ENCODE measurements at regions of chr21 and their contacts with region 1.

Region 1: DNA sequence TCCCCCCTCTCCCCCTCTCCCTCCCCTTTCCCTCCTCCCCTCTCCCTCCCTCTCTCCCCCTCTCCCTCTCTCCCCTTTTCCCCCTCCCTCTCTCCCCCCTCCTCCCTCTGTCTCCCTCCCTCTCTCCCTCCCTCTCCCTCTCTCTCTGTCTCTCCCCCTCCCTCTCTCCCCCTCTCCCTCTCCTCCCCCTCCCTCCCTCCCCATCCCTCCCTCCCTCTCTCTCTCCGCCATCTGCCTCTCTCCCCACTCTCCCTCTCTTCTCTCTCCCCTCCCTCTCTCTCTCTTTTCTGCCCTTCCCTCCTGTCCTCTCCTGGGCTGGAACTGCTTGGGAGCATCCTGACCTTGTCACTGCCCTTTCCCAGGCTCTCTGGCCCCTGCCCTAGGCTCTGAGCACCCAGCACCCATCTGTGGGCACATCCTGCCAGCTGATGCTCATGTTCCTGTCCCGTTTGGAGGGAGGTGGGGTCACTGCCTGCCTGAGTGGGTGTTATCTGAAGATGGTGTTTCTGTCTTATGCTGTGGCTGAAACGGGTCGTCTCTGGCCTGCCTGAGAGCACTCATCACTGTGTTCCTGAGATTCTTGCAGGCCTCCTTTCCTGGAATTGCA is 10.8 kb downstream of the FTCD start:
- DNase-seq: no peak
- ATAC-seq: no peak
- H3K4me3 ChIP-seq: no peak overlapping the region
- H3K4me3 Mint-ChIP-seq: no peak overlapping the region
- H3K27ac ChIP-seq: no peak overlapping the region
- H3K27ac Mint-ChIP-seq: no peak overlapping the region
- H3K4me1 ChIP-seq: peaks cover 12% of the 10 kb centered on the region
- H3K4me1 Mint-ChIP-seq: peaks cover 8% of the 10 kb centered on the region
- H3K27me3 ChIP-seq: no peaks in the 10 kb centered on the region
- H3K27me3 Mint-ChIP-seq: no peaks in the 10 kb centered on the region
- CTCF ChIP-seq: no peak

Region 2: DNA sequence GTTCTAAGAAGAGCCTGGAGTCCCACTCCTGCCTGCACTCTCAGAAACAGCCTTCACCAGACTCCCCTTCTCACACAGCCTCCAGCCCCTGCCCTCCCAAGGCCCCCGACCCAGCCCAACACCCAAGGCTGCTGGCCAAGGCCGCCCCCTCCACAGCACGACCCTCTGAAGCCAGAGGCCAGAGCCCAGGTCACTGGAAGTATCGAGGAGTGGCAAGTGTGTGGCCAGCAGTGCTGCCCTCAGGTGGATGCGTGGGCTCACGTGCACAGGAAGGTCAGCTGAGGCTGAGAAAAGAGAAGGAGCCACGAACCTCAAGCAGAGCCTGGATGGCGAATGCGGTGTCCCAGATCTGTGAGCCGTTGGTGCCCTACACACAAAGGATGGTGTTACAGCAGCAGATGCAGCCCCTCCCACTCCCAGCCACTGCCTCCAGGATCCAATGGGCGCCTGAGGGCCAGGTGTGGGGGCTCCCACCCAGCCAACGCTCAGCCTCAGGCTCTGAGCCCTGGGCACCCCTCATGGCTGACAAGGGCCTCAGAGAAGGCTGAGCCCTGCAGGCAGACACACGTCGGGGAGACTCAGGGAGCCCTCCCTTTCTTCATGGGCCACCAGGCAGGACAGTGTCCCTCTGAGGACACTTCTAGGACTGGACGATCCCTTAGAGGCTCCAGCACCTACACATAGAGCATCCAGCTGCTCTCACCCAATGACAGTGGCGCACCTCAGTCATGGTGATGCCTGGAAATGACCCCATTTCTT is 66.0 kb after region 1 on chr21:
- CTCF ChIA-PET with region 1: no interaction called
- POLR2A ChIA-PET with region 1: no interaction called
- intact Hi-C with region 1: no loop called
- DNase-seq: peak in 1 of 14 experiments; percentile 15
- ATAC-seq: no peak
- H3K4me3 ChIP-seq: no peak overlapping the region
- H3K4me3 Mint-ChIP-seq: no peak overlapping the region
- H3K27ac ChIP-seq: no peak overlapping the region
- H3K27ac Mint-ChIP-seq: no peak overlapping the region
- H3K4me1 ChIP-seq: no peaks in the 10 kb centered on the region
- H3K4me1 Mint-ChIP-seq: no peaks in the 10 kb centered on the region
- H3K27me3 ChIP-seq: no peaks in the 10 kb centered on the region
- H3K27me3 Mint-ChIP-seq: no peaks in the 10 kb centered on the region
- CTCF ChIP-seq: no peak

Region 3: DNA sequence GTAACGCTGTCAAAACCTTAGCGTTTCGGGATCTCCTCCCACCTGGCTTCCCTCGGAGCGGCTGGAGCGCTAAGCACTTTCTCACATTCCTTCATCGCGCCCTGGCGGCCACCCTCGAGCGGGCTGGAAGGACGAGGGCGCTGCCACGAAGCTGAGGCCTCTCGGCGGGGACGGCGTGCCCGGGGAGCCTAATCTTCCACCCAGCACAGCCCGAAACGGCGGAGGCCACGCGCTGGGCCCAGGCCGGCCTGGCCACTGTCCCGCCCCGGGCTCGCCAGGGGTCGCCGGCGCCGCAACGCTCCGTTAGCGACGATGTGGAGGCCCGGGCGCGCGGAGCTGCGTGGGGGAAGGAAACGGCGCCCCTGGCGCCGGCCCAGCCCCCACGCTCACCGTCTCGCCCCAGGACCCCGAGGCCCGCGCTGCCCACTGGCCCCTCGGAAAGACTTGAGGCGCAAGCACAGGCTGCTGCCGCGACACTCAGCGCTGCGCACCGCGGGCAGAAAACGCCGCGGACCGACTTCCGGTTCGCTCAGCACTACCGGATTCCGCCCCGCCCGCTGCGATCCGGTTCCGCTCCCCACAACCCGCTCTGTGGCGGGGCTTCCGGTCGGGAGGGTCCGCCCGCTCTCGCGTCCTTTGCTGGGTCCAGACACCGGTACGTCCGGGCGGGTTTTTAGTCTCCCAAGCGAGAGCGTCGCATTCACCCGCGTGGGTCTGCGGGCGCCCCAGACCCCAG is 141.4 kb after region 1 on chr21 and contains the start of gene YBEY:
- CTCF ChIA-PET with region 1: interaction called, 3 read pairs
- POLR2A ChIA-PET with region 1: interaction called, 5 read pairs
- intact Hi-C with region 1: loop called (anchors 2 to 10 kb)
- DNase-seq: peak; percentile 68 to 92 (median 82)
- ATAC-seq: peak; percentile 80
- H3K4me3 ChIP-seq: peak within 1 kb of the TSS; percentile 84
- H3K4me3 Mint-ChIP-seq: peak within 1 kb of the TSS; percentile 98
- H3K27ac ChIP-seq: peak within 1 kb of the TSS; percentile 72 to 84
- H3K27ac Mint-ChIP-seq: peak within 1 kb of the TSS; percentile 86
- H3K4me1 ChIP-seq: peaks cover 49% of the 10 kb centered on the region
- H3K4me1 Mint-ChIP-seq: peaks cover 54% of the 10 kb centered on the region
- H3K27me3 ChIP-seq: no peaks in the 10 kb centered on the region
- H3K27me3 Mint-ChIP-seq: no peaks in the 10 kb centered on the region
- CTCF ChIP-seq: peak; percentile 41
- total RNA-seq, gene YBEY: 10.6 to 14.8 TPM

Region 4: GRCh38 chr21:46411236-46411635 is 266.7 kb after region 1 on chr21:
- CTCF ChIA-PET with region 1: no interaction called
- POLR2A ChIA-PET with region 1: no interaction called
- intact Hi-C with region 1: no loop called
- DNase-seq: no peak
- ATAC-seq: no peak
- H3K4me3 ChIP-seq: no peak overlapping the region
- H3K4me3 Mint-ChIP-seq: no peak overlapping the region
- H3K27ac ChIP-seq: no peak overlapping the region
- H3K27ac Mint-ChIP-seq: no peak overlapping the region
- H3K4me1 ChIP-seq: no peaks in the 10 kb centered on the region
- H3K4me1 Mint-ChIP-seq: no peaks in the 10 kb centered on the region
- H3K27me3 ChIP-seq: no peaks in the 10 kb centered on the region
- H3K27me3 Mint-ChIP-seq: no peaks in the 10 kb centered on the region
- CTCF ChIP-seq: no peak